Astrocyte of the cerebellum (primary cell): ENCODE measurements at regions of chr2 and their contacts with region 1.

Region 1: GRCh38 chr2:210938228-210938627 is 381.8 kb downstream of the CPS1 start:
- DNase-seq: no peak
- H3K4me3 ChIP-seq: no peak overlapping the region
- CTCF ChIP-seq: no peak

Region 2: DNA sequence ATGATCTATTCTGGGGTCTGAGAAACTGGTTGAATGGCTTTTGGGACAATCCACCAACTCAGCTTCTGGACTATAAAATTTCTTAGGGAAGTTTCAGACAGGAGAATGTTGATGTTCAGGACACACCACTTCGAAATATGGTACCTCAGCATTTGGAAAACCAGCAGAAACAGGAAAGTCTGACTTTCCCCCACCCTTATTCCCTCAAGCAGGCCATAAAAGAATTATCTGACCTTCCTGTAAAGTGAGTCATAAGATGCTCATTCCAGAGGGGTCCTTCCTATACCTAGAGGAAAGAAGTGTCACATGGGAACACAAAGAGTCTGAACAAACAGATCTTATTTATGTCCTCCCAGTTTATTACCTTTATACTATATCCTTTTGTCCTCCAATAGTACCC is 33.2 kb after region 1 on chr2:
- in situ Hi-C with region 1: loop called (anchors 5 kb)
- DNase-seq: no peak
- H3K4me3 ChIP-seq: no peak overlapping the region
- CTCF ChIP-seq: no peak